ENCODE measurements at regions of chrX and their contacts with region 1.

Region 1: GRCh38 chrX:73863268-73863667 is 300.3 kb downstream of the CHIC1 start:
- DNase-seq: no peak
- ATAC-seq: no peak
- H3K4me3 ChIP-seq: no peak overlapping the region
- H3K27ac ChIP-seq: no peak overlapping the region
- H3K4me1 ChIP-seq: no peaks in the 10 kb centered on the region
- H3K27me3 ChIP-seq: no peaks in the 10 kb centered on the region
- CTCF ChIP-seq: no peak

Region 2: DNA sequence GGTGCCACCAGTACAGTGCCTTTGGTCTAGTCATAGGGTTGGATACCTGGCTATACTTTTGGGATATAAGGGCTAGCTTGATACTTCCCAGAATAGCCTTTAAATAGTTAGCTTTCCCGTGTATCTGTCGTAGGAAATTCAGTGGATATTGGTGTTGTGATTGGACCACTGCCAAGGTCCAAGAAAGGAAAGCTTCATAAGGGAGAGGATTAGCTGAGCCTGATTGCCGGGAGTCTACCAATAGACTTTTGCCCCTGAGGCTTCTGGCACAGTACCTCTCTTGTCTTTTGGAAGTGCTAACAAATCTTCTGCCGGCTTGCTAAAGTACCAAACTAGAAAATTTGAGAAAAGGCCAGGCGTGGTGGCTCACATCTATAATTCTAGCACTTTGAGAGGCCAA is 50.3 kb after region 1 on chrX:
- intact Hi-C with region 1: no loop called
- DNase-seq: no peak
- ATAC-seq: no peak
- H3K4me3 ChIP-seq: no peak overlapping the region
- H3K27ac ChIP-seq: no peak overlapping the region
- H3K4me1 ChIP-seq: peaks cover 0 to 3% (median 0%) of the 10 kb centered on the region in 3 donors
- H3K27me3 ChIP-seq: peaks cover 0 to 6% (median 0%) of the 10 kb centered on the region in 4 donors
- CTCF ChIP-seq: no peak

Region 3: DNA sequence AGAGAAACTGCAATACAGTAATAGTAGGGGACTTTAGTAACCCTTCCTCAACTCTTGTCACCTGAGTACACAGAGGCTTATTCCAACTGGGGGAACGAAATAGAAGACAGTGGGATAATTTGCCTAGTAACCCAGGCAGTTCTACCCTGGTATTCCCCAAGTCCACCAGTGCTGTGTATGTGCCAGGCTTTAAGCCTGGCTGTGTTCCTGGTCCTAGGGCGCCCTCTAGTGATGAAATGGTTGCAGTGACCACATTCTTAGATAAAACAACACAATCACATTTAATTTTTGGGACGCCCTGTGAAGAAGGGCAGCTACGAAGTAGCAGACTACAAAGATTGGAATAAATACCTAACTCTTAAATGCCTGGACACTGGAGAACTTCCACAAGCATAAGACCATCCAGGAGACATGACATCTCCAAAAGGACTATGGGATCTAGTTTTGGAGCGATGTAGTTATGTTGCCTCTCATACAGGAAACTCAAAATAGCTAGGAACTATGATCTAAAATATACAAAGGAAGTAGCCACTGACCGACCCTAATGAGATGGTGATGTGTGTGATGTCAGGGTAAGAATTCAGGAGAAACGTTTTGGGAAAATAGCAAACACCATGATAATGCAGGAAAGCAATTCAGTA is 152.2 kb after region 1 on chrX:
- intact Hi-C with region 1: loop called in 2 of 3 experiments (anchors 5 to 10 kb)
- DNase-seq: peak in 5 of 6 donors; percentile 17 to 75 (median 56)
- ATAC-seq: peak; percentile 87 to 99 (median 95)
- H3K4me3 ChIP-seq: no peak overlapping the region
- H3K27ac ChIP-seq: no peak overlapping the region
- H3K4me1 ChIP-seq: no peaks in the 10 kb centered on the region
- H3K27me3 ChIP-seq: no peaks in the 10 kb centered on the region
- CTCF ChIP-seq: peak; percentile 66 to 86 (median 70)